CD8-positive, alpha-beta T cell (primary cell): ENCODE measurements at regions of chr1 and their contacts with region 1.

Region 1: DNA sequence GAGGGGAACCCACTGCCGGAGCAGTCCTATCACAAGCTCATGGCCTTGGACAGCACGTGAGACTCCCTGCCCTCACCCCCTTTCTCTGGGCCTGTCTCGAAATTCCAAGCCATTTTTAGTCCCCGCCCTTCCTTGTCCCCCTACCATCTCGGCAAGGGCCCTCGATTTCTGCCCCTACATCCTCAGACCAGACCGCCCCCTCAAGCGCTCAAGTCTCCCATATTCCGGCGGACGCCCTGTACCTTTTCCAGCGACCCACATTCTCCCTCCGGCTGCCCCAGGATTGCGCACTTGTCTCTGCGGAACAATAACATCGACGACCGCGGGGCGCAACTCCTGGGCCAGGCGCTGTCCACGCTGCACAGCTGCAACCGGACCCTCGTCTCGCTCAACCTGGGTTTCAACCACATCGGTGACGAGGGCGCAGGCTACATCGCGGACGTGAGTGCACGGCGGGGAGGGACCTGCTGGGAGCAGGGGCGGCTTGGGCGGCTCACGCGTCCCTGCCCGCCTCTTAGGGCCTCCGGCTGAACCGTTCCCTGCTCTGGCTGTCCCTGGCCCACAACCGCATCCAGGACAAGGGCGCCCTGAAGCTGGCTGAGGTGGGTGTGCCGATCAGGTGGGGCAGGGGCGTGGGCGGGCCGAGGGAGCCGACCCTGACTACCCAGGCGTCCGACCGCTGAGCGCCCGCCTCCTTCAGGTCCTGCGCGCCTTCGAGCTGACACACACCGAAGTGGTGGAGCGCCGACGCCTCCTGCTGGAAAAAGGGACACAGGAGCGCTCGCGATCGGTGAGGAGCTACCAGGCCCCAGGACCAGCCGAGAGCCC is 7.0 kb downstream of the LRRC71 start:
- DNase-seq: peak; percentile 25 to 74 (median 61)
- ATAC-seq: peak; percentile 80
- H3K4me3 ChIP-seq: peak overlapping the region in 1 of 2 experiments; percentile 20
- H3K4me3 Mint-ChIP-seq: no peak overlapping the region
- H3K27ac ChIP-seq: no peak overlapping the region
- H3K27ac Mint-ChIP-seq: no peak overlapping the region
- H3K4me1 ChIP-seq: peaks cover 16% of the 10 kb centered on the region
- H3K4me1 Mint-ChIP-seq: peaks cover 22% of the 10 kb centered on the region
- H3K27me3 ChIP-seq: peaks cover 37 to 43% of the 10 kb centered on the region in 2 experiments
- H3K27me3 Mint-ChIP-seq: peaks cover 67% of the 10 kb centered on the region
- CTCF ChIP-seq: no peak

Region 2: DNA sequence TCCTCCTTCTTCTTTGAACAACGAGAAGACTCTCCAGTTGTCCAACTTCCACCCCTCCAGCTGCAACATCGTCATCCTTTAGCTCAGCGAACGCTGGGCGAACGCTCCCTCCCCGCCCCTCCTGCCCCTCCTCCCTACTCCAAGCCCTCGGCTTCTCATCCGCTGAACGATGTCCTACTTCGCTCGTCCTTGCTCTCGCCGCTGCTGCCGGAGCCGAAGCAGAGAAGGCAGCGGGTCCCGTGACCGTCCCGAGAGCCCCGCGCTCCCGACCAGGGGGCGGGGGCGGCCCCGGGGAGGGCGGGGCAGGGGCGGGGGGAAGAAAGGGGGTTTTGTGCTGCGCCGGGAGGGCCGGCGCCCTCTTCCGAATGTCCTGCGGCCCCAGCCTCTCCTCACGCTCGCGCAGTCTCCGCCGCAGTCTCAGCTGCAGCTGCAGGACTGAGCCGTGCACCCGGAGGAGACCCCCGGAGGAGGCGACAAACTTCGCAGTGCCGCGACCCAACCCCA is 285.6 kb before region 1 on chr1 and contains the start of gene BCAN:
- CTCF ChIA-PET with region 1: no interaction called
- POLR2A ChIA-PET with region 1: no interaction called
- intact Hi-C with region 1: no loop called
- DNase-seq: peak in 4 of 9 experiments; percentile 24 to 43 (median 36)
- ATAC-seq: peak; percentile 29
- H3K4me3 ChIP-seq: peak within 1 kb of the TSS in 1 of 2 experiments; percentile 15
- H3K4me3 Mint-ChIP-seq: peak within 1 kb of the TSS; percentile 73
- H3K27ac ChIP-seq: no peak within 1 kb of the TSS
- H3K27ac Mint-ChIP-seq: no peak within 1 kb of the TSS
- H3K4me1 ChIP-seq: peaks cover 31% of the 10 kb centered on the region
- H3K4me1 Mint-ChIP-seq: peaks cover 32% of the 10 kb centered on the region
- H3K27me3 ChIP-seq: peaks cover 35 to 47% of the 10 kb centered on the region in 2 experiments
- H3K27me3 Mint-ChIP-seq: peaks cover 77% of the 10 kb centered on the region
- CTCF ChIP-seq: no peak
- total RNA-seq, gene BCAN: not detected

Region 3: DNA sequence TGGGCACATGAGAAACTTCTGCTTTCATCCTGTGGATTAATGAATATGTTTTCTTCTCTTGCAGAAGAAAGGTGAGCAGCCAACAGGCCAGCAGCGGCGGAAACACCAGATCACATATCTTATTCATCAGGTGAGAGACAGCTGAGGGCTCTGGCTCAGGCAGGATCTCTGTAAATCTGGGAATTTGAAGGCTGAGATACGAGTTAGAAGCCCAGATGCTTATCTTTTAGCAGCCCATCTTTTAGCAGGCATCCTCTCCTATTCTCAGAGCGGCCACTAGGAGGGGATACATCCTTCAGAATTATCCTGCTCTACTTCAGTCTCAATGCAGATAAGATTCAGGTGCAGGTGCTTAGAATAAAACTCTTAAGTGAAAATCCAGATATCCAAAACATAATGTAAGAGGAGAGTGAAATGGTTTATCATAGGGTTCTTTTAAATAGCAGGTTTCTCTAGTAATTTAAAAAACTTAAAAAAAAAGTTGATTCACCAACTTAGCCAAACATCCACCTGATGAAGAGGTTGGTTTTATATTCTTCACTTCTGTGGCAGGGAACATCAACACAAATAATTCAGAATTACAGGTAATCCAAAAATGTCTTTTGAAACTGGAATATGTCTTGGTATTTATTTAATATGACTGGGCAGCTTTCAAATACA is 130.1 kb before region 1 on chr1:
- CTCF ChIA-PET with region 1: interaction called, 3 read pairs
- POLR2A ChIA-PET with region 1: interaction called, 6 read pairs
- intact Hi-C with region 1: loop called in 1 of 2 experiments (anchors 2 kb)
- DNase-seq: peak in 7 of 9 experiments; percentile 48 to 84 (median 68)
- ATAC-seq: peak; percentile 91
- H3K4me3 ChIP-seq: no peak overlapping the region
- H3K4me3 Mint-ChIP-seq: no peak overlapping the region
- H3K27ac ChIP-seq: no peak overlapping the region
- H3K27ac Mint-ChIP-seq: no peak overlapping the region
- H3K4me1 ChIP-seq: no peaks in the 10 kb centered on the region
- H3K4me1 Mint-ChIP-seq: peaks cover 8% of the 10 kb centered on the region
- H3K27me3 ChIP-seq: no peaks in the 10 kb centered on the region
- H3K27me3 Mint-ChIP-seq: no peaks in the 10 kb centered on the region
- CTCF ChIP-seq: peak; percentile 87

Region 4: GRCh38 chr1:156948708-156949107 is 21.3 kb after region 1 on chr1:
- CTCF ChIA-PET with region 1: no interaction called
- POLR2A ChIA-PET with region 1: no interaction called
- intact Hi-C with region 1: no loop called
- DNase-seq: no peak
- ATAC-seq: no peak
- H3K4me3 ChIP-seq: no peak overlapping the region
- H3K4me3 Mint-ChIP-seq: no peak overlapping the region
- H3K27ac ChIP-seq: no peak overlapping the region
- H3K27ac Mint-ChIP-seq: no peak overlapping the region
- H3K4me1 ChIP-seq: no peaks in the 10 kb centered on the region
- H3K4me1 Mint-ChIP-seq: no peaks in the 10 kb centered on the region
- H3K27me3 ChIP-seq: no peaks in the 10 kb centered on the region
- H3K27me3 Mint-ChIP-seq: no peaks in the 10 kb centered on the region
- CTCF ChIP-seq: no peak